ENCODE measurements at regions of chr19 and their contacts with region 1.

Region 1: DNA sequence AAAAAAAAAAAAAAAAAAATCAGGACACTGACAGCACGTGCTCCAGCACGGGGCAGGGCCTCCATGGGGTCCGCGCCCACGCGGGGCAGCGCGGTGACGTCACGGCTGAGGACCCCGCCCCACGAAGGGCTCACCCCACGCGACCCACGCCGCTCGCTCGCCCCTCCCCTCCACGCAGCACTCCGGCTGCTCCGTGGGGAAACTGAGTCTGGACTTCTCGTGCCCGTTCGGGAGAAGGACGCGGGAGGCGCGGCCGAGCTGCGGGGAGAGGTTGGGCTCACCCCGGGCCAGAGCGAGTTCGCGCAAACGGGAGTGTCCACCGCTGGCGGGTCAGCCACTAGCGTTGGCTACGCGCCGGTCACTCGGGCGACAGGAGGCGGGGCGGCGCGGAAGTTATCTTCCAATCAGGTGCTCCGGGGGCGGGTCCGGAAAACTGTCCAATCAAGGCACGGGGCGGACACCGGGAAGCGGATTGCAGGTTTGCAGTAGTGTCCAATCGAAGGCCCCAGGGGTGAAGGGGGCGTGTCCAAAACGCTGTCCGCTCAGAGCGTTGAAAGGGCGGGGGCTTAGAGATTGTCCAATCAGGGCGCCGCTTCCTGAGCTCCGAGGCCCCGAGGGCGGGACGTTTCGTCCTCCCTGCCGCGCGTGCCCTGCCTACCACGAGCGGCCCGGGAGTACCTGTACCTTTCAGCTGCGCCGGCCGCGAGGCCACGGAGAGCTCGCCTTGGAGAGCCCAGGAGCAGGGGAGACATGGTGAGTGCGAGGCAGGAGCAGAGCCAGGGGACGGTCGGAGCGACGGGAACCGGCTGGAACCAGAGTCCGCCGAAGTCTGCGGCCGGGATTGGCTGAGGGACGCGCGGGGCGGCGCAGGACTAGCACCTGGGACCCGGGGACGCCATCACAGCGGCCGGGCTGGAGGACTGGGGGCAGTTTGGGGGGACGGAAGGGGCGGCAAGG is at the start of gene ZNF57:
- DNase-seq: peak; percentile 100
- ATAC-seq: peak; percentile 99
- H3K4me3 ChIP-seq: peak within 1 kb of the TSS; percentile 37 to 57
- H3K27ac ChIP-seq: peak within 1 kb of the TSS in 1 of 2 donors; percentile 43
- H3K4me1 ChIP-seq: no peaks in the 10 kb centered on the region
- H3K27me3 ChIP-seq: no peaks in the 10 kb centered on the region
- total RNA-seq, gene ZNF57: 2.7 to 4.1 TPM

Region 2: GRCh38 chr19:2840794-2841790 is 59.5 kb before region 1 on chr19 and contains the start of gene ZNF555:
- intact Hi-C with region 1: loop called in 1 of 2 experiments (anchors 1 kb)
- DNase-seq: peak; percentile 99 to 100
- ATAC-seq: peak; percentile 100
- H3K4me3 ChIP-seq: peak within 1 kb of the TSS; percentile 63 to 81
- H3K27ac ChIP-seq: peak within 1 kb of the TSS in 1 of 2 donors; percentile 72
- H3K4me1 ChIP-seq: no peaks in the 10 kb centered on the region
- H3K27me3 ChIP-seq: no peaks in the 10 kb centered on the region
- total RNA-seq, gene ZNF555: 8.1 to 9.5 TPM

Region 3: DNA sequence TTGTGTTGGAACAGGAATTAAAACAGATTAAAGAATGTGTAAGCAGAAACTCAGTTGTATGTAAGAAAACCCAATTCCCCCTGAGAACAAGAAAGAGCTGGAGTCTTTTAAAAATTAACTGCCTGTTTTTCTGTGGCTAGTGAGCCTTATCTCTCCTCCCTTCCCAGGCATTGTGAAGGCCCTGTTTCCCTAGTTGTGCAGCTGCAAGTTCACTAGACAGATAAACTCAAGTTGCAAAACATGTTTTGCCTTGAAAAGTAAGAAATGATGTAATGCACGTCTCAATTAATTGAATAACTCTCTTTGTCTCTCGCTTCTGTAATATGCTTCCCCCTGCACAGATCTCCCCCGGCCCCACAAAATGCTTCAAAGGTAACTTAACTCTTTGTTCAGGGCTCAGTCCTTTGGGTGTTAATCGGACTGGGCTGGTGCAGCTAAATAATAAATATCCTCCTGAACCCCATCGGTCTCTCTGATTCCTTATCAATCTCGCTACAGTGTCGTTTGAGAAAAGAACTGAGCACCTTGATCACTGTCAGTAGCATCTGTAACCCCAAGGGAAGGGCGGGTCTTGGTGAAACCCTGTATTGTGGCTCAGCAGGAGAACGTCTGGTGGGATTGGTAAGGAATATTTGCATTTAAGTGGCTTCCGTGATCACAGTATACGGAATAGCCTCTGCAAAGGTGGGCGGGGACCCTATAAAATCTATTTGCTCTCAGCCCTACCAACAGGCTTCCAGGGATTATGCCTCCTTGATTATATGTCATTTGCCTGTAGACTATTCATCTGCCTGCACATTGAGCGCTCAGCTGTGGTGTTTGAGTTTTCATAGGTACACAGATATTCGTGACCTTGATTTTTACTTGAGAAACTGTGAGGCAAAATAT is 35.0 kb before region 1 on chr19:
- intact Hi-C with region 1: no loop called
- DNase-seq: no peak
- ATAC-seq: no peak
- H3K4me3 ChIP-seq: no peak overlapping the region
- H3K27ac ChIP-seq: no peak overlapping the region
- H3K4me1 ChIP-seq: no peaks in the 10 kb centered on the region
- H3K27me3 ChIP-seq: no peaks in the 10 kb centered on the region